ENCODE measurements at regions of chr7 and their contacts with region 1.

Region 1: GRCh38 chr7:57404343-57404953 is 45.5 kb upstream of the ZNF716 start:
- DNase-seq: no peak
- H3K4me3 ChIP-seq: no peak overlapping the region
- H3K4me3 Mint-ChIP-seq: no peak overlapping the region
- H3K27ac ChIP-seq: no peak overlapping the region
- H3K27ac Mint-ChIP-seq: no peak overlapping the region
- H3K4me1 ChIP-seq: no peaks in the 10 kb centered on the region
- H3K4me1 Mint-ChIP-seq: no peaks in the 10 kb centered on the region
- H3K27me3 ChIP-seq: no peaks in the 10 kb centered on the region
- H3K27me3 Mint-ChIP-seq: no peaks in the 10 kb centered on the region

Region 2: GRCh38 chr7:57343901-57344622 is 60.4 kb before region 1 on chr7:
- CTCF ChIA-PET with region 1: no interaction called
- POLR2A ChIA-PET with region 1: no interaction called
- intact Hi-C with region 1: no loop called
- DNase-seq: no peak
- H3K4me3 ChIP-seq: no peak overlapping the region
- H3K4me3 Mint-ChIP-seq: no peak overlapping the region
- H3K27ac ChIP-seq: no peak overlapping the region
- H3K27ac Mint-ChIP-seq: no peak overlapping the region
- H3K4me1 ChIP-seq: no peaks in the 10 kb centered on the region
- H3K4me1 Mint-ChIP-seq: peaks cover 0 to 1% (median 0%) of the 10 kb centered on the region in 4 donors
- H3K27me3 ChIP-seq: no peaks in the 10 kb centered on the region
- H3K27me3 Mint-ChIP-seq: no peaks in the 10 kb centered on the region

Region 3: GRCh38 chr7:57417731-57418130 is 13.3 kb after region 1 on chr7:
- CTCF ChIA-PET with region 1: no interaction called
- POLR2A ChIA-PET with region 1: no interaction called
- intact Hi-C with region 1: loop called (anchors 1 kb)
- DNase-seq: no peak
- H3K4me3 ChIP-seq: no peak overlapping the region
- H3K4me3 Mint-ChIP-seq: no peak overlapping the region
- H3K27ac ChIP-seq: no peak overlapping the region
- H3K27ac Mint-ChIP-seq: no peak overlapping the region
- H3K4me1 ChIP-seq: no peaks in the 10 kb centered on the region
- H3K4me1 Mint-ChIP-seq: no peaks in the 10 kb centered on the region
- H3K27me3 ChIP-seq: no peaks in the 10 kb centered on the region
- H3K27me3 Mint-ChIP-seq: no peaks in the 10 kb centered on the region